SK-N-SH (cell line): ENCODE measurements at regions of chr2 and their contacts with region 1.

Region 1: GRCh38 chr2:15636972-15637785 is 45.5 kb downstream of the DDX1 start:
- DNase-seq: peak; percentile 87
- H3K4me3 ChIP-seq: no peak overlapping the region; a peak in 1 of 4 replicates
- H3K27ac ChIP-seq: peak overlapping the region in 1 of 2 experiments; percentile 70; a peak in 2 of 4 replicates
- H3K4me1 ChIP-seq: peaks cover 5 to 8% of the 10 kb centered on the region in 2 experiments; a peak in 1 of 4 replicates
- H3K27me3 ChIP-seq: no peaks in the 10 kb centered on the region
- CTCF ChIP-seq: peak; percentile 98
- EP300 ChIP-seq: no peak
- RAD21 ChIP-seq: peak; percentile 100

Region 2: GRCh38 chr2:15826273-15826717 is 189.1 kb after region 1 on chr2:
- CTCF ChIA-PET with region 1: interaction called, 12 read pairs
- POLR2A ChIA-PET with region 1: no interaction called
- DNase-seq: peak; percentile 77
- H3K4me3 ChIP-seq: no peak overlapping the region
- H3K27ac ChIP-seq: peak overlapping the region in 1 of 2 experiments; percentile 44; a peak in 1 of 4 replicates
- H3K4me1 ChIP-seq: peaks cover 0 to 17% of the 10 kb centered on the region in 2 experiments; a peak in 1 of 4 replicates
- H3K27me3 ChIP-seq: no peaks in the 10 kb centered on the region
- CTCF ChIP-seq: no peak
- EP300 ChIP-seq: peak in 1 of 2 experiments; percentile 62; a peak in 1 of 4 replicates
- RAD21 ChIP-seq: no peak; the same call in 1 of the 2 replicates

Region 3: DNA sequence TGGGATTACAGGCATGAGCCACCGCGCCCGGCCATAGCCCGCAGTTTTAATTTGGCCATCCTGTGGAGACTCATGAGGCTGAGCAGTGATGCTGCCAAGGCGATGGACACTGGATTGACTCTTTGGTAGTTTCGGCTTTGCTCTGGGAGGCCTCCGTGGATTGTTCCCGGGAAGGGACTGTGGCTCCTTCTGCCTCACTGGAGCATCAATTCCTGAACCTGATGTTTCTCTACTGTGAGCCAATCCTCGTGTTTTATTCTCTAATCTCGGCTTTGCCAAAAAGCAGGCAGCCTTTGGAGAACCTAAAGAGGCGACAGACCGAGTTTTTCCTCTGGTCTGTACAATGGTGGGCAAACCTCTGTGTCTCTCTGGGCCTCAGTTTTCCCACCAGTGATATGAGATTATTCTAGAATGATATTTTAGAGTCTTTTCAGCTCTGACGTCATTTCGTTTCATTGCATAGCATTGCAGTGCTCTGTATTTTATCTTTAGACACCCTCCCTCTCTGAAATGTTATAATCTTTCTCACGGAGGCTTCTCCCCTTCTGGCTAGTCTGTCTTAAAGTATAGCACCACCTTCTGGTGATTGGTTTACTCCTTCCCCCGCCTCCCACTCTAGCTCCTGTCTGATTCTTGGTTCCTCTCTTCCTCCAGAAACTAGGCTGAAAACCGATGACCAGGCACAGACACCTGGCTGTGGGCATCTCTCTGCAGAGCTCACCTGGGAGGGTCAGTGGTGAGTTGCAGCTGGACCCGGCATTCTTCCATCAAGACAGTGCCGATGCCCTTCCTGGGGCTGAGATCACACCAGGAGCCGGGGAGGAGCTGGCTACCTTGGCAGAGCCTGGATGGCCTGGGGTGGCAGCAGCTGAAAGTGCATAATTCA is 644.5 kb after region 1 on chr2:
- CTCF ChIA-PET with region 1: interaction called, 10 read pairs
- POLR2A ChIA-PET with region 1: no interaction called
- DNase-seq: peak; percentile 61
- H3K4me3 ChIP-seq: no peak overlapping the region
- H3K27ac ChIP-seq: no peak overlapping the region
- H3K4me1 ChIP-seq: peaks cover 0 to 18% of the 10 kb centered on the region in 2 experiments; a peak in 1 of 4 replicates
- H3K27me3 ChIP-seq: no peaks in the 10 kb centered on the region
- CTCF ChIP-seq: no peak
- EP300 ChIP-seq: no peak
- RAD21 ChIP-seq: peak; percentile 76

Region 4: GRCh38 chr2:16513626-16514025 is 876.4 kb after region 1 on chr2:
- CTCF ChIA-PET with region 1: interaction called, 67 read pairs
- POLR2A ChIA-PET with region 1: no interaction called
- DNase-seq: no peak
- H3K4me3 ChIP-seq: no peak overlapping the region
- H3K27ac ChIP-seq: no peak overlapping the region
- H3K4me1 ChIP-seq: peaks cover 0 to under 1% of the 10 kb centered on the region in 2 experiments; a peak in 1 of 4 replicates
- H3K27me3 ChIP-seq: no peaks in the 10 kb centered on the region
- CTCF ChIP-seq: no peak
- EP300 ChIP-seq: no peak
- RAD21 ChIP-seq: no peak